ENCODE measurements at regions of chr16 and their contacts with region 1.

Region 1: GRCh38 chr16:30571695-30572600 is at the start of gene ZNF688:
- DNase-seq: peak; percentile 94 to 97
- ATAC-seq: peak; percentile 88 to 96 (median 94)
- H3K4me3 ChIP-seq: peak within 1 kb of the TSS; percentile 65 to 90 (median 83)
- H3K27ac ChIP-seq: peak within 1 kb of the TSS; percentile 96 to 99 (median 99)
- H3K4me1 ChIP-seq: peaks cover 6 to 50% (median 23%) of the 10 kb centered on the region in 9 donors
- H3K27me3 ChIP-seq: no peaks in the 10 kb centered on the region
- CTCF ChIP-seq: peak in 1 of 9 donors; percentile 8
- total RNA-seq, gene ZNF688: 6.3 to 16.2 (median 12.4) TPM

Region 2: GRCh38 chr16:30429678-30430427 is 142.1 kb before region 1 on chr16 and contains the start of gene DCTPP1:
- intact Hi-C with region 1: loop called in 1 of 10 experiments (anchors 10 kb)
- DNase-seq: peak; percentile 90 to 98
- ATAC-seq: peak; percentile 97 to 99 (median 99)
- H3K4me3 ChIP-seq: peak within 1 kb of the TSS; percentile 63 to 97 (median 72)
- H3K27ac ChIP-seq: peak within 1 kb of the TSS in 9 of 10 donors; percentile 60 to 83 (median 74)
- H3K4me1 ChIP-seq: peaks cover 3 to 33% (median 19%) of the 10 kb centered on the region in 9 donors
- H3K27me3 ChIP-seq: no peaks in the 10 kb centered on the region
- CTCF ChIP-seq: peak; percentile 52 to 84 (median 78)
- total RNA-seq, gene DCTPP1: 22.8 to 39.9 (median 29.7) TPM

Region 3: GRCh38 chr16:30526823-30527635 is 44.9 kb before region 1 on chr16:
- intact Hi-C with region 1: loop called in 6 of 10 experiments (anchors 5 to 10 kb)
- DNase-seq: peak; percentile 98 to 99
- ATAC-seq: peak; percentile 92 to 97 (median 95)
- H3K4me3 ChIP-seq: peak overlapping the region; percentile 52 to 87 (median 71)
- H3K27ac ChIP-seq: peak overlapping the region; percentile 94 to 100 (median 99)
- H3K4me1 ChIP-seq: peaks cover 8 to 43% (median 38%) of the 10 kb centered on the region in 9 donors
- H3K27me3 ChIP-seq: no peaks in the 10 kb centered on the region
- CTCF ChIP-seq: peak in 6 of 9 donors; percentile 23 to 50 (median 33)

Region 4: GRCh38 chr16:30557957-30558788 is 13.8 kb before region 1 on chr16 and contains the start of gene ZNF764:
- intact Hi-C with region 1: loop called in 1 of 10 experiments (anchors 1 kb)
- DNase-seq: peak; percentile 96 to 99
- ATAC-seq: peak; percentile 95 to 99 (median 97)
- H3K4me3 ChIP-seq: peak within 1 kb of the TSS; percentile 52 to 98 (median 80)
- H3K27ac ChIP-seq: peak within 1 kb of the TSS; percentile 86 to 99 (median 96)
- H3K4me1 ChIP-seq: peaks cover 0 to 64% (median 47%) of the 10 kb centered on the region in 9 donors
- H3K27me3 ChIP-seq: no peaks in the 10 kb centered on the region
- CTCF ChIP-seq: peak in 1 of 9 donors; percentile 12
- total RNA-seq, gene ZNF764: 6.3 to 15.3 (median 10.3) TPM

Region 5: GRCh38 chr16:30637942-30638341 is 66.0 kb after region 1 on chr16:
- intact Hi-C with region 1: loop called in 1 of 10 experiments (anchors 2 kb)
- DNase-seq: no peak
- ATAC-seq: no peak
- H3K4me3 ChIP-seq: no peak overlapping the region
- H3K27ac ChIP-seq: no peak overlapping the region
- H3K4me1 ChIP-seq: peaks cover 0 to 25% (median 11%) of the 10 kb centered on the region in 9 donors
- H3K27me3 ChIP-seq: no peaks in the 10 kb centered on the region
- CTCF ChIP-seq: peak in 6 of 9 donors; percentile 12 to 39 (median 27)

Measured in heart right ventricle (tissue), 16 donors.